GM23248 (cell line): ENCODE measurements at regions of chr10 and their contacts with region 1.

Region 1: DNA sequence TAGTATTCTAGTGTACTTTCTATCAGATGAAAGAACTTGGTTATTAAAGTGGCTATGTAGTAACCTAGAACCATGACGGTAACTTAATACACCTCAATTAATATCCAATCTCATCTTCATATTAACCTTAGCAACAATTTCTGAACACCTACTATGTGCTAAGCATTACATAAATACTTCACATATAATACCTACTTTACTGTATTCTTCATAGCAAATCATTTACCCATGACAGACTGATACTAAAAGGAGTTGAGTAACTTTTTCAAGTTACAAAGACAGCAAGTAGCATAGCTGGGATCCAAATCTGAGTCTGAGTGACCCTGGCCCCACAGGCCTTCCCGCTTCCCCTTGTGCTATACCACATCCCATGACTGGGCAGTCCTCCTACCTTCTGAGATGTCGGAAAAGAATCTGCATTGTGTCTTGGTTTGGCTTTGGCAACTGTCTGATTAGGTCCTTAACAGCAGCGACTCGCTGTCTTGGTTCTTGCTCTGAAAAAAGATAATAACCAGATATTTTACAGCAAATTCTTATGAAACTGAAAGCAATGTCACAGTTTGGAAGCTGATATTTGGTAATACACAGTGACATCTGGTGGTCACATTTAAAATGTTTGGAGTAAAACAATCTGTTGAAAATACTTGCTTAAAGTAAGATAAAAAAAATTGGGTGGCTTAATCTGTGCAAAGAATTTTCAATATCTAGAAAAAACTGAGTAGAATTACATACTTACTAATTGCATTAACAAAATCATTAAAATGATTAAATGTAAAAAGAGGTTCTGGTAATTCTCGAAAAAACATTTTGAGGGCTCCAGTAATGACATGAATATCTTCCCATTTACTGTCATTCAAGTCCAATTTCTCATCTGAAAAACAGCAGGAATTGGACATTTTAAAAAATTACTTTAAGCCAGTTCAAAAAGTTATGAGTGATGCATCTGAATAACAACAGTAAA is 120.1 kb downstream of the ARHGAP12 start:
- DNase-seq: peak; percentile 82
- H3K4me3 ChIP-seq: peak overlapping the region; percentile 73
- H3K27ac ChIP-seq: peak overlapping the region; percentile 85
- H3K4me1 ChIP-seq: peaks cover 46% of the 10 kb centered on the region
- H3K27me3 ChIP-seq: no peaks in the 10 kb centered on the region

Region 2: GRCh38 chr10:30736685-30737232 is 1071.8 kb before region 1 on chr10:
- in situ Hi-C with region 1: loop called (anchors 25 kb)
- DNase-seq: peak; percentile 99
- H3K4me3 ChIP-seq: 0 out of 2 replicates have a peak overlapping the region, but pooled peaks have one; percentile 4
- H3K27ac ChIP-seq: peak overlapping the region; percentile 93
- H3K4me1 ChIP-seq: peaks cover 12% of the 10 kb centered on the region
- H3K27me3 ChIP-seq: no peaks in the 10 kb centered on the region

Region 3: GRCh38 chr10:32651609-32652008 is 843.1 kb after region 1 on chr10:
- in situ Hi-C with region 1: no loop called
- DNase-seq: no peak
- H3K4me3 ChIP-seq: no peak overlapping the region
- H3K27ac ChIP-seq: no peak overlapping the region
- H3K4me1 ChIP-seq: no peaks in the 10 kb centered on the region
- H3K27me3 ChIP-seq: 0 out of 2 replicates have a peak, but pooled peaks cover 4% of the 10 kb centered on the region